CD4-positive, alpha-beta memory T cell (primary cell): ENCODE measurements at regions of chr2 and their contacts with region 1.

Region 1: DNA sequence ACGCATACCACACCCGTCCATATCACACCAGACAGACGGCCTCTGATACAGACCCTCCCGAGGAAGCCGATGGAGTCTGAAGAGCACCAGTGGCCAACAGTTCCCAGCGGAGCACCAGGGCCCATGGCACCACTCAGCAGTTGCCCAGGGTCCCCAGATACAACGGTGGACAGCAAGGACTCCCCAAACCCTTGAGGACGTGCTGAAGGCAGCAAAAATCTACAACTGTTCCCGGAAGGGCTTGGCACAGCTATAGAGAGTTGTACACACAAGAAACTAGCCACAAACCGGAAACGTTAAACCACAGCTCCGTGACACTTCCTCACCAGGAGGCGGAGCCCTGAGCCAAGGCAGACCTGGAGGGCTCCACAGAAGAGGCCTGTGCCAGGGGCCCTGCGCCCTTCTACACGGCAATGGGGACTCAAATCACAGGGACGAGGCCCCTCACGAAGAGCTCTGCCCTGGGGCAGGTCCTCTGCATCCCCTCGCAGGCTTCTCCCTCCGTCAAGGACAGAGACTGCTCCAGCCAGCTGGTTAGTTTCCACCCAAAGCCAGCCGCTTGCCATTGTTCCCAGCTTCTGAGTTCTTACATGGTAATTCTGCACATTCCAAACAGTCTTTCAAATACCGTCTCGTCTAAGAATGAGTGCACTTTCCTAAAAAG is 133.4 kb downstream of the HDAC4 start:
- DNase-seq: peak; percentile 93 to 96 (median 94)
- H3K4me3 ChIP-seq: peak overlapping the region; percentile 64 to 79
- H3K4me3 Mint-ChIP-seq: peak overlapping the region; percentile 95 to 98 (median 97)
- H3K27ac ChIP-seq: peak overlapping the region; percentile 81
- H3K27ac Mint-ChIP-seq: peak overlapping the region; percentile 95 to 100 (median 98)
- H3K4me1 ChIP-seq: peaks cover 75% of the 10 kb centered on the region
- H3K4me1 Mint-ChIP-seq: peaks cover 46 to 87% (median 68%) of the 10 kb centered on the region in 4 donors
- H3K27me3 ChIP-seq: no peaks in the 10 kb centered on the region
- H3K27me3 Mint-ChIP-seq: no peaks in the 10 kb centered on the region

Region 2: DNA sequence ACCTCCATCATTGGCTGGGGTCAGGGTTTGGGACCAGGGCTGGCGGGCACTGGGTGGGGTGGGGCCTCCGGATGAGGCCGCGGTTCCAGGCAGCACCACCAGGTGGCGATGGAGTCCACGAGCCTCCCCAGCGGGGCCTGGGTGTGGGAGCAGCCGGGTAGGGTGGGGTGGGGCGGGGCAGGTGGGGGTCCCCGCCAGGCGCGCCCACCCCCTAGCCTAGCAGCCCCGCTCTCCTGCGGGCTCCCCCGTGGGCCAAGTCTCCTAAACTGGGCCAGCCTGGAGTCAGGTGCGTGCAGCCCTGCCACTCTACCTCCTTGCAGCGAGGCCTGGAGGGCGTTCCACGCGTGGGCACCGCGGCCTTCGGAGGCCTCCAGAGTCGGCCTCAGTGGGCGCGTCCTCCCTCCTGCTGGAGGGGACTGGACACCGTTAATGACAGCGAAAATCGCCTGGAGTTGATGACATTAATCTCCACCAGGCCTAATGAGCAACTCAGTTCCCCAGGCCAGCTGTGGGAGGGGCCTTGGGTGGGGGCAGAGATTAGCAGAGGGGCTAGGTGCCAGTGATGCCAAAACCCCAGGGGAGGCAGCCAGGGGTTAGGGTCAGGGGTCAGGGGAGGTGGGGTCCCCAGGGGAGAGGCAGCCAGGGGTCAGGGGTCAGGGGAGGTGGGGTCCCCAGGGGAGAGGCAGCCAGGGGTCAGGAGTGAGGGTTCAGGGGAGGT is 231.9 kb before region 1 on chr2:
- CTCF ChIA-PET with region 1: no interaction called
- POLR2A ChIA-PET with region 1: no interaction called
- intact Hi-C with region 1: loop called (anchors 1 kb)
- DNase-seq: peak; percentile 46 to 63 (median 54)
- H3K4me3 ChIP-seq: no peak overlapping the region
- H3K4me3 Mint-ChIP-seq: no peak overlapping the region
- H3K27ac ChIP-seq: no peak overlapping the region
- H3K27ac Mint-ChIP-seq: no peak overlapping the region
- H3K4me1 ChIP-seq: no peaks in the 10 kb centered on the region
- H3K4me1 Mint-ChIP-seq: no peaks in the 10 kb centered on the region
- H3K27me3 ChIP-seq: no peaks in the 10 kb centered on the region
- H3K27me3 Mint-ChIP-seq: peaks cover 3 to 8% of the 10 kb centered on the region in 2 donors

Region 3: GRCh38 chr2:239247401-239248245 is 19.8 kb before region 1 on chr2:
- CTCF ChIA-PET with region 1: interaction called, 13 read pairs
- POLR2A ChIA-PET with region 1: interaction called, 10 read pairs
- intact Hi-C with region 1: no loop called
- DNase-seq: peak in 2 of 5 donors; percentile 12 to 72
- H3K4me3 ChIP-seq: no peak overlapping the region
- H3K4me3 Mint-ChIP-seq: peak overlapping the region in 7 of 8 donors; percentile 21 to 75 (median 64)
- H3K27ac ChIP-seq: no peak overlapping the region
- H3K27ac Mint-ChIP-seq: peak overlapping the region in 6 of 7 donors; percentile 42 to 90 (median 78)
- H3K4me1 ChIP-seq: peaks cover 15% of the 10 kb centered on the region
- H3K4me1 Mint-ChIP-seq: peaks cover 27 to 73% (median 49%) of the 10 kb centered on the region in 4 donors
- H3K27me3 ChIP-seq: no peaks in the 10 kb centered on the region
- H3K27me3 Mint-ChIP-seq: no peaks in the 10 kb centered on the region

Region 4: DNA sequence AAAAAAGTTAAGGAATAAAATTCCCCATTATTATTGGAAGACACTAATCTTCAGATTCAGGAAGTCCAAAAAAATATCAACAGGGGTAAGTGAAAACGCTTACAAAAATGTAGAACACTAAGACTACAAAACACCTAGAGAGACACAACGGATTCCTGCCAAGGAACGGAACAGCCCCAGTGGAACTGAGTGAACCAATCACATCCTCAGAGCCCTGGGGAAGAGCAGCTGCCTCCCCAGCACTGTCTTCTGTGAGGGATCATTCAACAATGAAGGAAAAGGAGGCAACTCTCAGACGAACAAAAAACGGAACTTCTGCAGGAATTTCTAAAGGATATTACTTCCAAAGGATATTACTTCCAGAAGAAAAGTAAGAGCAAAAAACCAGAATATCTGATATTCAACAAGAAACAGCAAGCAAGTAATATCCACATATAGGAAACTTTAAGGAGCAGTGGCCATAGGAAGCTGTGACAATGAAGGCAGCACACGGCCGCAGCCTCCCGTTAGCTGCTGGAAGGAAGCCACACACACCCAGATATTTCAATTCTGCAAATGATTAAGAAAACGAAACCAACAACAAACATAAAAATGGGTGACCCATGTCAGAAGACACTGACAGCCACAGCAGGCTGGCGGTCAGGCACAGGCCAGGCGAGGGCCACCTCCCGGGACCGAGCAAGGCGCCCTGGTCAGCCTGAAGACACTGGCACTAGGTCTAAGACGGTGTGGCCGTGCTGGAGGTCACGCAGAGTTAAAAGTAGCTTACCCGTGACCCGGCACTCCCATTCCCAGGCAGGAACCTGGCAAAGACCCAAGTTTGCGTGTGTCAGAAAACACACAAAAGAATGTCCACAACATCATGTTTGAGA is 51.6 kb after region 1 on chr2:
- CTCF ChIA-PET with region 1: interaction called, 16 read pairs
- POLR2A ChIA-PET with region 1: interaction called, 14 read pairs
- intact Hi-C with region 1: no loop called
- DNase-seq: no peak
- H3K4me3 ChIP-seq: peak overlapping the region in 1 of 2 donors; percentile 28
- H3K4me3 Mint-ChIP-seq: peak overlapping the region; percentile 73 to 93 (median 80)
- H3K27ac ChIP-seq: peak overlapping the region; percentile 49
- H3K27ac Mint-ChIP-seq: peak overlapping the region; percentile 81 to 96 (median 94)
- H3K4me1 ChIP-seq: peaks cover 44% of the 10 kb centered on the region
- H3K4me1 Mint-ChIP-seq: peaks cover 42 to 78% (median 55%) of the 10 kb centered on the region in 4 donors
- H3K27me3 ChIP-seq: no peaks in the 10 kb centered on the region
- H3K27me3 Mint-ChIP-seq: no peaks in the 10 kb centered on the region

Region 5: DNA sequence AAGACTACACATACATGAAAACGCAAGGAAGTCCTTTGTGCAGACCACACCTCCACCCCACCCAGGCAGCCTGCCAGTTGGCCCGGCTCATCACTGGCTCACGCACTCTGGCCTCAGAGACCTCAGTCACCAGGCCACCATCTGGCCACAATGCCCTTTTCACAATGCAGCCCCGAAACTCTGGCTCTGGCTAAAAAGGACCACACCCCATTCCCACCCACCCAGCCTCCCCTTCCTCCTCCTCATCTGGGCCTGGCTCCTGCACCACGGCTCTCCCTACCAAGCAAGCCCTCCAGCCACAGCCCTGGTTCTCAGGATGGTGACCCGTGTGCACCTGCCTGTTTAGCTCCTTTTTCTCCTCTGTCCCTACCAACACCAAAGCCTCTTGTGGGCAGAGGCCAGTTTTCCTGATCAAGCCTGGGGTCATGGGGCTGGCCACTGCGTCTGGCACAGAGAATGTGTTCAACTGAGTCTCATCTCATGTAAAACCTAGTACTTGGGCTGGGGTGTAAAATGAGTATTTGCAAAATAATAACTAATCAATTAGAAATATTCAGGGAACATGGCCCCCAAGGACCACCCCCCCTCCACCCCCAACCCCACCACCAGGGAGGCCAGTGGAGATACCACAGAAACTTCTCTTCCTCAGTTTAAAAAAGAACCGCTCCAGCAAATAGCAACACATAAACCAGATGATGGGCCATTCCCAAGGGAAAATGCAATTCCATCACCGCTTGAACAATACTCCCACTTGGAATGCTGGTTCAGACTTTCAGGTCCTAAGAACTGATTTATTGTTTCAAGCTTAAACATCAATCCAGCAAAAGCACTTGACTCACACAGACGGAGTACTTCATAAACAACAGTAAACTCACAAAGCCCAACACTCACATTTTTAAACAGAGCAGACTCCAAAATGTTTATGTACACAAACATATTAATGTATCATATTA is 126.2 kb after region 1 on chr2:
- CTCF ChIA-PET with region 1: interaction called, 34 read pairs
- POLR2A ChIA-PET with region 1: interaction called, 27 read pairs
- intact Hi-C with region 1: no loop called
- DNase-seq: peak in 1 of 5 donors; percentile 22
- H3K4me3 ChIP-seq: no peak overlapping the region
- H3K4me3 Mint-ChIP-seq: no peak overlapping the region
- H3K27ac ChIP-seq: no peak overlapping the region
- H3K27ac Mint-ChIP-seq: peak overlapping the region in 5 of 7 donors; percentile 32 to 74 (median 39)
- H3K4me1 ChIP-seq: peaks cover 10% of the 10 kb centered on the region
- H3K4me1 Mint-ChIP-seq: peaks cover 14 to 35% (median 24%) of the 10 kb centered on the region in 4 donors
- H3K27me3 ChIP-seq: no peaks in the 10 kb centered on the region
- H3K27me3 Mint-ChIP-seq: no peaks in the 10 kb centered on the region

Region 6: DNA sequence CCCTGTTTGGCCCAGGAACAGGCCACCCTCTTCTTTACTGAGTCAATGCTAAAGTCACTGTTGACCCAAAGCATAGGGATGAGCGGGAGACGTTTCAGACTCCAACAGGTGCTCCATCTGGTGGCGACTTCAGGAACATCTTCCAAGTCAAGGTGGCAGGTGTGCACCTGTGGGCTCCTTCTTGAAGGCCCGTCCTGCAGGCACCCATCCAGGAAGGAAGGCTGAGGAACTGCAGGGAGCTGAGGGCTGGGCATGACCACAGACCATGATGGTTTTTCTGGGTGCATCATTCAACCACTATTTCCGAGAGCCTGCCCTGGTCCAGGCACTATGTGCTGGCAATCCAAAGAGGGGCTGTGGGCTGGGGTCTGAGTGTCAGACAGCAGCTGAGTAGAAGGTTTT is 614.9 kb after region 1 on chr2:
- CTCF ChIA-PET with region 1: interaction called, 34 read pairs
- POLR2A ChIA-PET with region 1: interaction called, 5 read pairs
- intact Hi-C with region 1: loop called (anchors 1 kb)
- DNase-seq: peak; percentile 50 to 67 (median 56)
- H3K4me3 ChIP-seq: no peak overlapping the region
- H3K4me3 Mint-ChIP-seq: peak overlapping the region in 1 of 8 donors; percentile 3
- H3K27ac ChIP-seq: no peak overlapping the region
- H3K27ac Mint-ChIP-seq: peak overlapping the region in 2 of 7 donors; percentile 5 to 67
- H3K4me1 ChIP-seq: peaks cover 8% of the 10 kb centered on the region
- H3K4me1 Mint-ChIP-seq: peaks cover 6 to 13% (median 8%) of the 10 kb centered on the region in 4 donors
- H3K27me3 ChIP-seq: no peaks in the 10 kb centered on the region
- H3K27me3 Mint-ChIP-seq: peaks cover 1 to 4% of the 10 kb centered on the region in 2 donors